Cardiac septum (tissue), 1 donor: ENCODE measurements at regions of chr15 and their contacts with region 1.

Region 1: GRCh38 chr15:94670438-94671034 is 439.2 kb downstream of the MCTP2 start:
- DNase-seq: no peak

Region 2: GRCh38 chr15:94586099-94586498 is 84.4 kb before region 1 on chr15:
- intact Hi-C with region 1: no loop called
- DNase-seq: no peak

Region 3: DNA sequence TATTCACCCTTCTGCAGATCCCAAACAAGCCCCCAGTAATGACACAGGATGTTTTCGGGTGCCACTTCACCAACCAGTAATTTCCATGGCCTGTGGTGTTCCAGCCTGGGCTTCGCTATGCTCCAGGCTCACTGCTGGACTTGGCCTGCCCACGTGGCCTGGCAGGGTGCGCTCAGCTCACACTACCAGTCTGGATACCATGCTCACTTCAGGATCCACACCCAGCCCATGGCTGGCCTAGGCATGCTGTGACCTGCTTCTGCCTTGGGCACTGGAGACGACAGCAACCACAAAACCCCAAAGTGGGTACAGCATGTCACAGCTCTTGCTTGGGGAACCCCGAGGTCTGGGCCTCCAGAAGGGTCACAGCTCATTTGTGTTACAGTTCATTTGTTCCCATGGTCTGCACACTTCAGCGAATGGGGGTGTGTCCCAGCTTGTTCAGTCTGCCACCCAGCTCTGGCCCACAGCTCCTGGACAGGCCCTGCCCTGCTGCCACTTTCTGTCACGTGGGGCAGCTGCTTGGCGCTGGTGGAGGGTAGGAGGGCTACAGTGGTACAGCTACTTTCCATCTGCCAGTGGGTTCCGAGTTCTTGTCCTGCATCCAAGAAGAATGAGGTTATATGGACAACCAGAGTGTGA is 211.7 kb after region 1 on chr15:
- intact Hi-C with region 1: no loop called
- DNase-seq: no peak

Region 4: GRCh38 chr15:95025924-95026728 is 355.6 kb after region 1 on chr15:
- intact Hi-C with region 1: loop called (anchors 10 kb)
- DNase-seq: no peak

Region 5: GRCh38 chr15:95132774-95133173 is 462.2 kb after region 1 on chr15:
- intact Hi-C with region 1: loop called (anchors 10 kb)
- DNase-seq: no peak